ENCODE measurements at regions of chr12 and their contacts with region 1.

Region 1: DNA sequence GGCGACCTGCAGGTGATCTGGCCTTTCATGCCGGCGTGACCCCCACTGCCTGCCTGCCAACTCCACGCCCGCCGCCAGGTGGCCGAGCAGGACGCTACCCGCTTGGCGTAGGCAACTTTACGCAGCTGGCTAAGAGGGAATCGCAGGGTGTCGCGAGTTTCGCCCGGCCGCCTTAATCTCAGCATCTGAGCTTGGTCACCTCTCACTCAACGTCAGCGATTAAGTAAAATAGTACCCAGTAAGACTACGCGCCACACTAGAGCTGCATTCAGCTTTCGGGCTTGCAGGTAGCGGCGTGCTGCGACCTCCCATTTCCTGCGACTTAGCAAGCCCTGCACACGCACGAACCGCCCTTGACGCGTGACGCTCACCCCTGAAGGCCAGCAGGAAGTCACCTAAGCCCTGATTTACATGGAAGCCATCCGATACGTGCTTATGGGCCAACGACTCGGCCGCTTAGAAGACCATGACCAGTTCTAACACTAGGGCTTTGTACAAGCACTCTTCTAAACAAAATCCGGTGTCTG is 33.2 kb downstream of the WBP11 start:
- DNase-seq: peak; percentile 69 to 97 (median 86)
- ATAC-seq: peak; percentile 51
- H3K4me3 ChIP-seq: peak overlapping the region; percentile 81 to 91
- H3K4me3 Mint-ChIP-seq: peak overlapping the region; percentile 99
- H3K27ac ChIP-seq: peak overlapping the region; percentile 95 to 99
- H3K27ac Mint-ChIP-seq: peak overlapping the region; percentile 99
- H3K4me1 ChIP-seq: peaks cover 35% of the 10 kb centered on the region
- H3K4me1 Mint-ChIP-seq: peaks cover 61% of the 10 kb centered on the region
- H3K27me3 ChIP-seq: no peaks in the 10 kb centered on the region
- H3K27me3 Mint-ChIP-seq: no peaks in the 10 kb centered on the region
- CTCF ChIP-seq: peak; percentile 79

Region 2: GRCh38 chr12:14365294-14366208 is 404.5 kb before region 1 on chr12 and contains the start of gene ATF7IP:
- CTCF ChIA-PET with region 1: no interaction called
- POLR2A ChIA-PET with region 1: interaction called, 37 read pairs
- intact Hi-C with region 1: loop called (anchors 1 to 2 kb)
- DNase-seq: peak; percentile 92 to 99 (median 95)
- ATAC-seq: peak; percentile 89
- H3K4me3 ChIP-seq: peak within 1 kb of the TSS; percentile 63 to 80
- H3K4me3 Mint-ChIP-seq: peak within 1 kb of the TSS; percentile 87
- H3K27ac ChIP-seq: peak within 1 kb of the TSS; percentile 88
- H3K27ac Mint-ChIP-seq: peak within 1 kb of the TSS; percentile 93
- H3K4me1 ChIP-seq: peaks cover 24% of the 10 kb centered on the region
- H3K4me1 Mint-ChIP-seq: peaks cover 46% of the 10 kb centered on the region
- H3K27me3 ChIP-seq: no peaks in the 10 kb centered on the region
- H3K27me3 Mint-ChIP-seq: no peaks in the 10 kb centered on the region
- CTCF ChIP-seq: no peak
- total RNA-seq, gene ATF7IP: 125 to 126 TPM

Region 3: DNA sequence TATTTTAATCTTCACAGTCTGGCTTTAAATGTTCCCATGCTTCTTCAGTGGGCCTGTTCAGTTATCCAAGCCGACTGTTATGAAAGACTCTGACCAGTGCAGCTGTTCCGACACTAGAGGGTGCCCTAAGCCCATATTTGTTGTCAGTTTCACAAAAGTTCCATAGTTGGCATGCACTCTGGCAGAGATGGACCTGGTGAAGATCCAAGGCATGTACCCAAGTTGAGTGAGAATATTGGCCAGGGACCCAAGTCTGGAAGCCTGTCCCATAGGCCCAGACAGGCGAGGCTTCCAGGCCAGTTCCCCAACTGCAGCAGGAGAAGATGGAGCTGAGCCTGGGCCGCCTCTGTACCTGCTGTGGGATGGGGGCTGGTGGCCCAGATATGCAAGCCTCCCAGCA is 46.3 kb before region 1 on chr12:
- CTCF ChIA-PET with region 1: interaction called, 7 read pairs
- POLR2A ChIA-PET with region 1: interaction called, 8 read pairs
- intact Hi-C with region 1: loop called (anchors 1 to 5 kb)
- DNase-seq: peak; percentile 10 to 79 (median 56)
- ATAC-seq: peak; percentile 80
- H3K4me3 ChIP-seq: no peak overlapping the region
- H3K4me3 Mint-ChIP-seq: no peak overlapping the region
- H3K27ac ChIP-seq: no peak overlapping the region
- H3K27ac Mint-ChIP-seq: no peak overlapping the region
- H3K4me1 ChIP-seq: no peaks in the 10 kb centered on the region
- H3K4me1 Mint-ChIP-seq: no peaks in the 10 kb centered on the region
- H3K27me3 ChIP-seq: peaks cover 0 to 2% of the 10 kb centered on the region in 2 experiments
- H3K27me3 Mint-ChIP-seq: peaks cover 12% of the 10 kb centered on the region
- CTCF ChIP-seq: peak; percentile 77

Region 4: DNA sequence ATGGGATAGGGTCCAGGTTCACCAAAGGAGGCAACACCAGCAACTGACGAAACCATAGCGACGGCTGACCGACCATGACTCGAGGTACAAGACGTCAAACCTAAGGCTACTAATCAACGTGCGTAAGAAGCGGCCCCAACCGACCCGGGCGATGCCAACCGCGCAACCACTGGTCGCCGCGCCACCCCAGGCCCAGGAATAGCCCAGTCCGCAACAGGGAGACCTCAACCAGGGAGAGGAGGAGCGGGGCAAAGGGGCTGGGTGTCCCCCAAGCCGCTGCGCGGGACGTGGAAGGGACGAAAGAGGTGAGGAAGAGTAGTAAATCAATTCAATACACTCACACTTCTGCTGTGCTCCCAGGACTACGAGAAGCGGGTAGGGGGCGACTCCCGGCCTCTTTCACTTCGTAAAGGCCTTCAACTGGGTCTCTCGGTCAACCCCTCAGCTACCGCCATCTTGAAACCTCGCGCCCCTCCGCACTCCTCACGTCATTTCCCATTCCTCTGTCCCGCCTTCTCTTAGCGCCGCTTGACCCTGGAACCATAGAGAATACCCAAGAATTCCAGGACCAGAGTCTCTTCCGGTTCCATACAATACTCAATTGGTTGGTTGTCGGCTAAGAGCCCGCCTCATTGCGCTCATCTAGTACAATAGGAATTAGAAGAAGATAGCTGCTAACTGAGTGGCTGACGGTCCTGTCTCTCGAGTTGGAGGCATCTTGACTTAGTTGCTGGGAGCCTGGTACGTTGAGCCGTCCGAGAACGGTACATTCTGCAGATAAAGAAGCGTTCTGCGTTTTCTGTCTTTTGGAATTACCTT is 33.2 kb after region 1 on chr12 and contains the starts of genes C12orf60 and WBP11:
- CTCF ChIA-PET with region 1: interaction called, 38 read pairs
- POLR2A ChIA-PET with region 1: interaction called, 184 read pairs
- intact Hi-C with region 1: loop called (anchors 1 kb)
- DNase-seq: peak; percentile 76 to 98 (median 87)
- ATAC-seq: peak; percentile 94
- H3K4me3 ChIP-seq: peak within 1 kb of the TSS; percentile 86 to 95
- H3K4me3 Mint-ChIP-seq: no peak within 1 kb of the TSS
- H3K27ac ChIP-seq: peak within 1 kb of the TSS; percentile 91 to 98
- H3K27ac Mint-ChIP-seq: no peak within 1 kb of the TSS
- H3K4me1 ChIP-seq: peaks cover 28% of the 10 kb centered on the region
- H3K4me1 Mint-ChIP-seq: peaks cover 12% of the 10 kb centered on the region
- H3K27me3 ChIP-seq: no peaks in the 10 kb centered on the region
- H3K27me3 Mint-ChIP-seq: no peaks in the 10 kb centered on the region
- CTCF ChIP-seq: no peak
- total RNA-seq, gene C12orf60: 0.14 TPM in 1 of 2 experiments, not detected in the other
- total RNA-seq, gene WBP11: 171 to 184 TPM

Region 5: DNA sequence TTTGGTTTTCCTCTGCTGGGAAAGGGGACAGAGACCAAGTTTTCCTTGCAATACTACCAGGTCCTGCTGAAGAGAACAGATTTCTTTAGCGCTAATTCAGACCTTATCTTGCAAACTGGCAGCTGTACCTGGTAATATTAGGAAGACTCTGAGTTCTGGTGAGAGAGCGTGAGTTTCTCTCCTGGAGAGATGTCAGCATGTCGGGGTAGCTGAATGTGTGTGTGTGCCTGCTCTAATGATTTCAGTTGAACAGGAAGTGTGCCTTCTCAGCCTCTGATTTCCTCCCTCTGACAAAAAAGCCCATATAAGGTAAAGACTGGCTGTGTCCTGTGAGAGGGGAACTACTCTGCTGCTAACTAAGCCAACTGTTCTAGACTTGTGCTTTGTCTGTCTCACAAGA is 178.6 kb after region 1 on chr12:
- CTCF ChIA-PET with region 1: no interaction called
- POLR2A ChIA-PET with region 1: interaction called, 17 read pairs
- intact Hi-C with region 1: loop called in 1 of 2 experiments (anchors 2 kb)
- DNase-seq: peak in 7 of 9 experiments; percentile 38 to 91 (median 65)
- ATAC-seq: peak; percentile 86
- H3K4me3 ChIP-seq: peak overlapping the region; percentile 27 to 48
- H3K4me3 Mint-ChIP-seq: peak overlapping the region; percentile 78
- H3K27ac ChIP-seq: peak overlapping the region; percentile 36 to 96
- H3K27ac Mint-ChIP-seq: peak overlapping the region; percentile 94
- H3K4me1 ChIP-seq: peaks cover 91% of the 10 kb centered on the region
- H3K4me1 Mint-ChIP-seq: peaks cover 93% of the 10 kb centered on the region
- H3K27me3 ChIP-seq: no peaks in the 10 kb centered on the region
- H3K27me3 Mint-ChIP-seq: no peaks in the 10 kb centered on the region
- CTCF ChIP-seq: no peak

Region 6: DNA sequence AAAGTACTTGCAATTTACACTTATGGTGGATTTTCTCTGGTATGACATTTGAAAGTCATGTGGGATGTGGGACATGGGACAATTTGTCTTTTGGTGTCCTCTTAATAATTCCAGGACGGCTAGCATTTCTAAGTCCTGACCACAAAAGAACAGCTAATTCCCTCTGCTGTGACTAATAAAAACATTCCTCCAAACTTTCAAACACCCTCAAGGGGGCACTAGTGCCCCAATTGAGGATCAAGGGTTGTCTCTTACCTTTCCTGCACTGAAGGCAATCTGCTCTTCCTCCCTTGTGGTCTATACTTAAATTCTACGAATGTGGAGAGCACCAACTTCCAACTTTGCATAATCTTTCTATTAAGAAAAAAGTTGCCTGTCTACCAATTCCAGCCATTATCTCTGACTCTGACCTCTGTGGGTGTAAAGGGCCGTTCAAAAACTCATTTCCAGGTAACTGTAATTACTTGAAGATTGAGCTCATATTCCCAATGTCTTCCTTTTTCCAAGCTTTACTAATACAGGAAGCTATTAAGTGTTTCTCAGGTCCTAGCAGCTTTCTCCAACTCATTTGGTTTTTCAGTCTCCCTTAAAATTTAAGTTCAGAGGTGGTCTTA is 762.4 kb after region 1 on chr12:
- CTCF ChIA-PET with region 1: interaction called, 3 read pairs
- POLR2A ChIA-PET with region 1: no interaction called
- intact Hi-C with region 1: loop called in 1 of 2 experiments (anchors 10 kb)
- DNase-seq: peak; percentile 15 to 72 (median 37)
- ATAC-seq: peak; percentile 55
- H3K4me3 ChIP-seq: no peak overlapping the region
- H3K4me3 Mint-ChIP-seq: no peak overlapping the region
- H3K27ac ChIP-seq: no peak overlapping the region
- H3K27ac Mint-ChIP-seq: no peak overlapping the region
- H3K4me1 ChIP-seq: peaks cover 25% of the 10 kb centered on the region
- H3K4me1 Mint-ChIP-seq: peaks cover 18% of the 10 kb centered on the region
- H3K27me3 ChIP-seq: no peaks in the 10 kb centered on the region
- H3K27me3 Mint-ChIP-seq: no peaks in the 10 kb centered on the region
- CTCF ChIP-seq: peak; percentile 70

Measured in CD8-positive, alpha-beta T cell (primary cell).